ENCODE measurements at regions of chr5 and their contacts with region 1.

Region 1: DNA sequence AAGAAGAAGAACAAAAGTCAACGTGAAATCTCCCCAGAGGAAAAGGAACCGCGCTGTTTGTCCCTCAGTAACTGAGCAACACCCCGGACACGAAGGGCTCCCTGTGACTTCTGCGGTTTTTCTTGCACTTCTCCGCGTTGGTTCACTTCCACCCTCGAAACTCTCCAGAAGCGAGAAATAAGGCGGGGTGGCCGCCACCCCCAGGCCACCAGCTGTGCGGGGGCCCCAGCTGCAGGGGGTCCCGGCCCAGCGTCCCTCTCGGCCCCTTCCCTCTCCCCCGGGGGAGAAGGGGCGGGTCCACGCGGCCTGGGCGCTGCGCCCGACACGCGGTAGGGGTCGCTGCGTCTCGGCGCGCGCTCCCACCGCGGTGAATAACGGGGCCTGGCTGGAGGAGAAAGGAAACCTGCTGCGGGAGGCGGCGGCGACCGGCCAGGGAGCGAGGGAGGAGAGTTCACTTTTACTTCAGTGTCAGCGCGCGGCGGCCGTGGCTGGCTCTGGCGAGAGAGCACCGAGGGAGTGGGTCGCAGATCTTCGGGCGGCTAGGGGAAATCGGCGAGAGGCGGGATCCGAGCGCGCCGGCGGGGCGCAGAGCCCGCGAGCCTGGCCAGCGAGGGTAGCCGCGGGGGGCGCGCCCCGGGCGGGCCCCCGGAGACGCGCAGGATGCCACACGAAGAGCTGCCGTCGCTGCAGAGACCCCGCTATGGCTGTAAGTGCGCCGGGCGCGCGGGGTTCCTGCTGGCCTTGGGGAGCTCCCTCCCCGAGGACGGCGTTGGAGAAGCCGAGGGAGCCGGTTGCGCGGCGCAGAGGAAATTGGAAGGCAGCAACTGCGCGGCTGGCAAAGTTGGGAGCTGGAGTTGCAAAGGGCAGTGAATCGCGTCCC is at the start of gene IQGAP2:
- DNase-seq: peak; percentile 79
- H3K4me3 Mint-ChIP-seq: peak within 1 kb of the TSS; percentile 98
- H3K27ac Mint-ChIP-seq: peak within 1 kb of the TSS; percentile 99
- H3K4me1 Mint-ChIP-seq: peaks cover 60% of the 10 kb centered on the region
- H3K27me3 Mint-ChIP-seq: peaks cover 4% of the 10 kb centered on the region
- total RNA-seq, gene IQGAP2: 43.5 and 45.4 TPM in 2 replicates

Region 2: DNA sequence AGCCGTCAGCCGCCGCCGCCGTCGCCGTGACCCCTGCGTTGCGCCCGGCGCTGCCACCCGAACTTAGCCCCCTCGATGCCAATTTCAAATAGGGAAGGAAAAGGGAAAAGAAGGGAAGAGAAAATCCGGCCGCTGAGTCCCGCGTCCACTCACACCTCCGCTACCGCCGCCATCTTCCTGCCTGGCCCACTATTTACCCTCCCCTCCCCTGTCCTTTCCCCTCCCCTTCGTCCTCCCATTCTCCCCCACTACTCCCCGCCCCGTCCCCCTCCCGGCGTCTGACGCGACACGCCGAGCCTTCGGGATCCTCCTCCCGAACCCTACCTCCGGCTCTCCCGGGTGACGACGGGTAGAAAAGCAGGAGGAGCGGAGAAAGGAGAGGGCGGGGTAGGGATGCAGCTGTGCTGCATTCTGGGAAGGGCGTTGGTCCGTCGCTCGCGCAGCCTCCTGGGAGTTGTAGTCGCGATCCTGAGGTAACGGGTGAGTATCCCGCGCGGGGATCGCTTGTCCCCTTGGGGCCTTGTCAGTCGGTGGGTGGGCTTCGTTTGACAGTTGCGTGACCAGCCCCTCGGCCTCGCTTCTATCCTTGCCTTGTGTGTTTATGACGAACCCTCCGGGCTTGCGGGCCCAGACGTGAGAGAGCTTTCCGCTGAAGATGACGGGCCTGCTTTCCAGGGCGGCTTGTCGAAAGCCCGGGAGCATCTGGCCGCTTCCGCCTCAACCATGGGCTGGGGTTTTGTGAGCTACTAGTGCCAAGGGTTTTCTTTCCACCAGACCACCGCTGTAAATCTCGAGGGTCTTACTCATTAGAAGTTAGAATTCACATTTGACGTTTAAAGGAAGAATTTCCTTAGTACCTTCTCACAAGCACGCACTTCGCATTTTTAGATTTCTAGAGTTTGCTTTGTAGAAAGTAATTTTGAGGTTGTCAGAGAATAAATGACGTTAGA is 891.4 kb before region 1 on chr5 and contains the starts of genes CERT1 and POLK:
- intact Hi-C with region 1: loop called (anchors 5 kb)
- DNase-seq: peak; percentile 96
- H3K4me3 Mint-ChIP-seq: peak within 1 kb of the TSS; percentile 99
- H3K27ac Mint-ChIP-seq: peak within 1 kb of the TSS; percentile 93
- H3K4me1 Mint-ChIP-seq: peaks cover 62% of the 10 kb centered on the region
- H3K27me3 Mint-ChIP-seq: no peaks in the 10 kb centered on the region
- total RNA-seq, gene CERT1: 41.0 and 43.4 TPM in 2 replicates
- total RNA-seq, gene POLK: 38.0 and 40.4 TPM in 2 replicates

Region 3: DNA sequence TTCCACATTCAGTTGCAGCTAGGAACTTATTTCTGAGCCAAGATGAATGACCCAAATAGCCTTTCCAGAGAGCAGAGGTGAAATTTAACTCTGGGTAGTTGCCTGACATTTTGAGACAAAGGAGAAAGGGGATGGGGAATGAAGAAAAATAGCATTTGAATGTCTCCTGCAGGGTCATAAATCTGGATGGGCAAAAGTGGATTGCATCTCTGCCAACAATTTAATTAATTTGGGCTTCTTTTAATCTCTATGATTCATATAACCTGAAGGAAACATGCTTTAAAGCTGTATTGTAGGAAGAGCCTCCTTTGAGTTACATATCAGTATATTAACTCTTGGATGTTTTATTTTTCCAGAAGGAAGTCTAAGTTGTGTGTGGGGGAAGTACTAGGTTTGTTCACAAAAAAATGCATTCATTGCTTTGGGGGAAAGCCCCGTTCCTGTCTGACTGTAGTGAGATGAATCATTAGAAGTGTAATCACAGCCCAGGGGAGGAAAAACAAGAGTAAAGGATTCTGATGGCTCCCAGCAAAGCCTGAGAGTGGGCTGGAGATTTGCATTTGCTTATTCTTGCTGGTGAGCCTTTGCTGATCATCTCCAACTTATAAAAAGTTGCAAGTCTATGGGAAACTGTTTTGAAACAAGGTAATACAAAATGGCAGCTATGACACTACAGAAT is 133.1 kb before region 1 on chr5:
- intact Hi-C with region 1: loop called (anchors 1 kb)
- DNase-seq: peak; percentile 33
- H3K4me3 Mint-ChIP-seq: peak overlapping the region; percentile 62
- H3K27ac Mint-ChIP-seq: peak overlapping the region; percentile 91
- H3K4me1 Mint-ChIP-seq: peaks cover 61% of the 10 kb centered on the region
- H3K27me3 Mint-ChIP-seq: no peaks in the 10 kb centered on the region

Region 4: GRCh38 chr5:76367623-76368371 is 35.3 kb before region 1 on chr5:
- intact Hi-C with region 1: loop called (anchors 1 kb)
- DNase-seq: peak; percentile 23
- H3K4me3 Mint-ChIP-seq: no peak overlapping the region
- H3K27ac Mint-ChIP-seq: peak overlapping the region; percentile 71
- H3K4me1 Mint-ChIP-seq: peaks cover 29% of the 10 kb centered on the region
- H3K27me3 Mint-ChIP-seq: no peaks in the 10 kb centered on the region

Region 5: GRCh38 chr5:76413746-76414145 is 10.6 kb after region 1 on chr5:
- intact Hi-C with region 1: no loop called
- DNase-seq: no peak
- H3K4me3 Mint-ChIP-seq: no peak overlapping the region
- H3K27ac Mint-ChIP-seq: no peak overlapping the region
- H3K4me1 Mint-ChIP-seq: peaks cover 42% of the 10 kb centered on the region
- H3K27me3 Mint-ChIP-seq: no peaks in the 10 kb centered on the region

Region 6: DNA sequence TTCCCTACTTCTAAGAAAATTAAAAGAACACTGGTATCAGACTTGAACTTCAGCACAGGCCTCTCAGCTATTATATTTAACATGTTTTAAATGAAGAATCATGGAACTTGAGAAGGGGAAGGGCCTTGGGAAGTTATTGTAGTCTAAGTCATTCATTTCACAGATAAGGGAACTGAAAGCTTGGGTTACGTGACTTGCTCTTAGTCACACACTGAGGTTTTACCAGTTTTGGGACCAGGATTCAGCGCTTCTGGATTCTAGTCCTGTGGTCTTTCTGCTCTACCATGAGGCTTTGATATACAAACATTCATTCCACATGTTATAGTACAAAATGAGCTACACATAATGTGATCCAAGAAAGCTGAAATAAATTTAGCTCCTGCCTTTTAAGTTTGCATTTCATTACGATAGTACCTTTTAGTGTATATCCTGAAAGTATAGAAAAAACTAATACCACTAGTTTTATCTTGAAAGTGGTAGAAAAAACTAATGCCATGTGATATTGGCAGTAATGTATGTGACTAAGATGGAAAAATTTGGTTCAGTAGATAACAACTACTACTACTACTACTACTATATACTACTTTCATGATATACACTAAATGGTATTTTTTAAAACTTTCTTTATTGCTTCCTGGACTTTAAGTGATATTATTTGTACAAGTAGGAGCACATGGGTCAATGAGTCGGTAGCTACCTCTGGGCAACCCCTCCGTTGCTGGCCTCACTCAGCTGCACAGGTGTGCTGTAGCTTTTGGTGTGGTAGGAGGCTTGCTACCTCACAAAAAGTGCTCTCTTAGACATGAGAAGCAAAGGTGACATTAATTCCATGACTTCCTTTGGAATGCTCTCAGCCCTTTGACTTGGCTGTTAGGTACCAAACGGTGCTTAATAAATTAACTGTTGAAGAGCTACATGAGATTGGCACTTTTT is 179.4 kb after region 1 on chr5:
- intact Hi-C with region 1: loop called (anchors 1 kb)
- DNase-seq: no peak
- H3K4me3 Mint-ChIP-seq: no peak overlapping the region
- H3K27ac Mint-ChIP-seq: no peak overlapping the region
- H3K4me1 Mint-ChIP-seq: peaks cover 33% of the 10 kb centered on the region
- H3K27me3 Mint-ChIP-seq: no peaks in the 10 kb centered on the region

Region 7: GRCh38 chr5:76691467-76692138 is 288.5 kb after region 1 on chr5:
- intact Hi-C with region 1: loop called (anchors 5 kb)
- DNase-seq: no peak
- H3K4me3 Mint-ChIP-seq: no peak overlapping the region
- H3K27ac Mint-ChIP-seq: peak overlapping the region; percentile 78
- H3K4me1 Mint-ChIP-seq: peaks cover 45% of the 10 kb centered on the region
- H3K27me3 Mint-ChIP-seq: no peaks in the 10 kb centered on the region